ENCODE measurements at regions of chr19 and their contacts with region 1.

Region 1: GRCh38 chr19:3762501-3763459 is at the start of gene MRPL54:
- DNase-seq: peak; percentile 91
- ATAC-seq: peak; percentile 95
- H3K4me3 ChIP-seq: peak within 1 kb of the TSS; percentile 97 to 98
- H3K27ac ChIP-seq: peak within 1 kb of the TSS; percentile 93
- H3K4me1 ChIP-seq: peaks cover 9% of the 10 kb centered on the region
- H3K27me3 ChIP-seq: no peaks in the 10 kb centered on the region
- CTCF ChIP-seq: no peak
- total RNA-seq, gene MRPL54: 42.8 TPM

Region 2: GRCh38 chr19:3748965-3749364 is 13.8 kb before region 1 on chr19:
- CTCF ChIA-PET with region 1: no interaction called
- POLR2A ChIA-PET with region 1: interaction called, 18 read pairs
- in situ Hi-C with region 1: no loop called
- intact Hi-C with region 1: no loop called
- DNase-seq: no peak
- ATAC-seq: no peak
- H3K4me3 ChIP-seq: no peak overlapping the region
- H3K27ac ChIP-seq: no peak overlapping the region
- H3K4me1 ChIP-seq: no peaks in the 10 kb centered on the region
- H3K27me3 ChIP-seq: no peaks in the 10 kb centered on the region
- CTCF ChIP-seq: no peak